ENCODE measurements at regions of chr1 and their contacts with region 1.

Region 1: DNA sequence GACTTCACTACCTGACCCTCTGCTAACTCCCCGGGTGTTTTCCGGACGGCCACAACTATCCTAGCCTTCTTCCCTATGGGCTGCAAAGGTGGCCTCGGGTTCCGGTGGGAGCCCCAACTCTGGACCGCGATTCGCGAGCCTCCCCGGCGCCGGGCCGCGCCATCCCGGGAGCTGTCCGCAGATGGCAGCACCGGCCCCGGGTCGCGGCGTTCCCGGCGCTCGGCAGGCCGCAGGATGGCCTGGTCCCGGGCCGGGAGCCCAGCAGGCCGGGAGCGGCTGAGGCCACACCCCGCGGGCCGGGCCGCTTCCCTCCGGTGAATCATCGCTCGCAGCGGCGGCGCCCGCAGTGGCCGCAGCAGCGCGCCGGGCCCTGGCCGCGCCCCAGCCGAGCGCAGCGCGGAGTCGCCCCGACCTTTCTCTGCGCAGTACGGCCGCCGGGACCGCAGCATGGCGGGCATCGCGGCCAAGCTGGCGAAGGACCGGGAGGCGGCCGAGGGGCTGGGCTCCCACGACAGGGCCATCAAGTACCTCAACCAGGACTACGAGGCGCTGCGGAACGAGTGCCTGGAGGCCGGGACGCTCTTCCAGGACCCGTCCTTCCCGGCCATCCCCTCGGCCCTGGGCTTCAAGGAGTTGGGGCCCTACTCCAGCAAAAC is at the start of gene CAPN2:
- DNase-seq: no peak
- H3K4me3 ChIP-seq: peak within 1 kb of the TSS; percentile 87 to 96 (median 94)
- H3K27ac ChIP-seq: peak within 1 kb of the TSS; percentile 98 to 99 (median 99)
- H3K4me1 ChIP-seq: peaks cover 50 to 85% (median 53%) of the 10 kb centered on the region in 3 donors
- H3K27me3 ChIP-seq: no peaks in the 10 kb centered on the region
- CTCF ChIP-seq: peak; percentile 55 to 89 (median 82)
- POLR2A ChIP-seq: peak in 2 of 4 donors; percentile 94
- total RNA-seq, gene CAPN2: 145 to 234 (median 177) TPM

Region 2: DNA sequence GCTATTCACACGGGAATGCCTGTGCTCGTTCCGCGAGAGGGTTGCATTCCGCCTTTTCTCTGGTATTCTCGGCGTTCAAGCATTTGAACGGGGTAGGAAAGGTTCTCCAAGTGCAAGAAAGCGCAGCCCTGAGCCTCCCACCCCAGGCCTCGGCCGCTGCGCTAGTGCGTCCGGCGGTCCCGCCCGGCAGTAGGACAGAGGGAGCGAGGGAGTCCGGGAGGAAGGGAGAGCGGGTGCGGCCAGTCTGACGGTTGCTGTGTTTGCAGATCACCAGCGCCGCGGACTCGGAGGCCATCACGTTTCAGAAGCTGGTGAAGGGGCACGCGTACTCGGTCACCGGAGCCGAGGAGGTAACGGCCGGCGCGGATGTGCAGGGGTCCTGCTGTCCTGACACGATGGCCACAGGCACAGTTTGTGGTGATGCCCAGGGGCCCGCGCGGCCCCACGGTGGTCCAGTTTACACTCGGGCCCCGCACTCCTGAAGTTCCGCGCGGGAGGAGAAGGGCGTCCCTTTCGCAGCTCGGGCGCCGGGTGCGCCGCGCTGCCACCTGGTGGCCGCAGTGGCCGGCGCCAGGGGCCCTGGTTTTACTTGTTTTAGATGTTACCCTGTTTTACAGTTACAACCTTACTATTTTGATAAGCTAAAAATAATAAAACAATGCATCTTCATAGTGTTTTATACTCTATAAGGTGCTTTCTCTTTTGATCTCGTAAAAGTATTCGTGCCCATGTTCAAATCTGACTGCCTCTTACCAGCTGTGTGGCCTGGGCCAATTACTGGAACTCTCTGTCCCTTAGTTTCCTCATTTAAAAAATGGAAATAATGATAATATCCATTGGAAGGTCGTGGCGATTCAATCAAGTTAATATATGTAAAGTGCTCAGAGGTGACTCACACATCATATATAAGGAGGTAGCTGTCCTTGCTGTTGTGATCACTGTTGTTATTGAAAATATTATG is 36.7 kb after region 1 on chr1:
- intact Hi-C with region 1: loop called (anchors 5 kb)
- DNase-seq: no peak
- H3K4me3 ChIP-seq: peak overlapping the region; percentile 15 to 63 (median 44)
- H3K27ac ChIP-seq: peak overlapping the region; percentile 51 to 82 (median 76)
- H3K4me1 ChIP-seq: peaks cover 13 to 25% (median 14%) of the 10 kb centered on the region in 3 donors
- H3K27me3 ChIP-seq: no peaks in the 10 kb centered on the region
- CTCF ChIP-seq: peak; percentile 93 to 97 (median 95)
- POLR2A ChIP-seq: no peak

Region 3: GRCh38 chr1:223776075-223776814 is 63.9 kb after region 1 on chr1:
- intact Hi-C with region 1: no loop called
- DNase-seq: no peak
- H3K4me3 ChIP-seq: no peak overlapping the region
- H3K27ac ChIP-seq: peak overlapping the region in 2 of 4 donors; percentile 19 to 64
- H3K4me1 ChIP-seq: peaks cover 0 to 28% (median 7%) of the 10 kb centered on the region in 3 donors
- H3K27me3 ChIP-seq: no peaks in the 10 kb centered on the region
- CTCF ChIP-seq: no peak
- POLR2A ChIP-seq: no peak

Measured in esophagus squamous epithelium (tissue), 5 donors.